ENCODE measurements at regions of chr21 and their contacts with region 1.

Region 1: DNA sequence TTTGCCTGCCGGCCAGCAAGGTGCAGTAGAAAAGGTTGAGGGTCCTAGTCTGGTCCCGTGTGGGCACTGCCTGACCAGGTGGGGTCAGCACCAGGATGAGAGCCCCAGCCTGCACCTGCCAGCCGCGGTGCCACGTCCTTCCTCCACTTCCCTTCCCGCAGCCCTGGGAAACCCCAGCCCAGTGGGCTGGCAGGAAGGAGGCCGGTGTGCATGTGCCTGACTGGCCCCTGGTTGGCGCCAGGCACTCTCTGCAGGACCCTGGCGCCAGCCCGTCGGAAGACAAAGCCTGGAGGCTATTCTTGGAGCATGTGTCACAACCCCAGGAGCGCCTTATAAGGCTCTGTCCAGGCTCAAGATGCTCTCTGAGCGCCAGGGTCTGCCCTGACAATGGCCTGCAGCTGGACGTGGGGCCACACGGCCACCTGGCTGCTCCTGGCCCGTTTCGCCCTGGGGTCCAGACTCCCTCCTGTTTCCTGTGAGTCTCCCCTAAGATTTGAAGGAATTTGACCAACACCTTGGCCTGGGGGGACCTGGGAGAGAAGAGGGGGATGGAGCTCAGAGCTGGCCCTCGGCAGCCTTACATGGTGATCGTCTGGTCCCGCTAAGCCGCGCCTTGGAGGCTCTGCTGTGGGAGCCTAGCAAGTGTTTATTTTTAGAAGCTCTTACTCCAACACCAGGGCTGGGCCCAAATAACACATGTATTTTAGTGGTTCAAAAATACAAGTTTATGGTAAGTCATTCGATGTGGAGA is 31.9 kb upstream of the POFUT2 start:
- DNase-seq: peak; percentile 87 to 93
- ATAC-seq: peak; percentile 81
- H3K4me3 ChIP-seq: no peak overlapping the region
- H3K27ac ChIP-seq: peak overlapping the region; percentile 84 to 96
- H3K4me1 ChIP-seq: no peaks in the 10 kb centered on the region
- H3K27me3 ChIP-seq: no peaks in the 10 kb centered on the region

Region 2: GRCh38 chr21:45294509-45295291 is 24.9 kb before region 1 on chr21:
- intact Hi-C with region 1: loop called in 1 of 2 experiments (anchors 1 kb)
- DNase-seq: peak; percentile 90 to 95
- ATAC-seq: peak; percentile 84
- H3K4me3 ChIP-seq: no peak overlapping the region
- H3K27ac ChIP-seq: peak overlapping the region; percentile 77
- H3K4me1 ChIP-seq: peaks cover 0 to 4% of the 10 kb centered on the region in 2 donors
- H3K27me3 ChIP-seq: no peaks in the 10 kb centered on the region

Region 3: DNA sequence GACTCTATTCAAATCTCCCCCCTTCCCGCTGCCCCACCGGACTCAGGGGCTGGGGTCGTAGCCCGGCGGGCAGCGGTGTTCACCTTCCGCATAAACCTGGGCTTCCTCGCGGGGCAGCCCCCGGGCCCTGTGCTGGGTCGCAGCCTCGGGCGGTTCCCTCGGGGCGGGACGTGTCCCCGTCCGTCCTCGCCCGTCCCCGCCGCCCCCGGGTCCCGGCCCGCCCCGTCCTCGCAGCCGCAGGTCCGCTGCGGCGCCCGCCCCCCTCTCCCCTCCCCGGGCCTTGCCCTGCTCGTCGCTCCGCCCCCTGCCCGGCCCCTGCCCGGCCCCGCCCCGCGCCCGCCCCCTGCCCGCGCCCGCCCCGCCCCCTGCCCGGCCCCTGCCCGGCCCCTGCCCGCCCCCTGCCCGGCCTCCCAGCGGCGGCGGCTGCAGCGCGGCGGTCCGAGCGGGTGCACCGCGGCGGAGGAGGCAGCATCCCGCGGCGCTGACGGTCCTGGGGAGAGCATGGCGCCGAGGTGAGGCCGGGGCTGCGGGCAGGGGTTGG is 85.2 kb after region 1 on chr21 and contains the start of gene COL18A1:
- intact Hi-C with region 1: loop called (anchors 2 to 5 kb)
- DNase-seq: peak; percentile 80 to 89
- ATAC-seq: peak; percentile 61
- H3K4me3 ChIP-seq: peak within 1 kb of the TSS; percentile 94
- H3K27ac ChIP-seq: peak within 1 kb of the TSS; percentile 77 to 83
- H3K4me1 ChIP-seq: no peaks in the 10 kb centered on the region
- H3K27me3 ChIP-seq: no peaks in the 10 kb centered on the region
- total RNA-seq, gene COL18A1: 289 to 301 TPM

Measured in aorta (tissue), 5 donors.